Calu3 (cell line): ENCODE measurements at regions of chr7 and their contacts with region 1.

Region 1: GRCh38 chr7:15889507-15889906 is 203.0 kb upstream of the MEOX2 start:
- DNase-seq: peak; percentile 56
- H3K4me3 Mint-ChIP-seq: no peak overlapping the region
- H3K27ac Mint-ChIP-seq: no peak overlapping the region
- H3K4me1 Mint-ChIP-seq: no peaks in the 10 kb centered on the region
- H3K27me3 Mint-ChIP-seq: no peaks in the 10 kb centered on the region
- CTCF ChIP-seq: peak; percentile 57

Region 2: GRCh38 chr7:15305002-15305600 is 584.4 kb before region 1 on chr7:
- CTCF ChIA-PET with region 1: no interaction called
- intact Hi-C with region 1: loop called (anchors 10 kb)
- DNase-seq: peak; percentile 78
- H3K4me3 Mint-ChIP-seq: no peak overlapping the region
- H3K27ac Mint-ChIP-seq: no peak overlapping the region
- H3K4me1 Mint-ChIP-seq: no peaks in the 10 kb centered on the region
- H3K27me3 Mint-ChIP-seq: no peaks in the 10 kb centered on the region
- CTCF ChIP-seq: peak; percentile 68

Region 3: GRCh38 chr7:15326044-15326644 is 563.4 kb before region 1 on chr7:
- CTCF ChIA-PET with region 1: no interaction called
- intact Hi-C with region 1: loop called (anchors 5 kb)
- DNase-seq: no peak
- H3K4me3 Mint-ChIP-seq: no peak overlapping the region
- H3K27ac Mint-ChIP-seq: no peak overlapping the region
- H3K4me1 Mint-ChIP-seq: no peaks in the 10 kb centered on the region
- H3K27me3 Mint-ChIP-seq: no peaks in the 10 kb centered on the region
- CTCF ChIP-seq: peak; percentile 58

Region 4: DNA sequence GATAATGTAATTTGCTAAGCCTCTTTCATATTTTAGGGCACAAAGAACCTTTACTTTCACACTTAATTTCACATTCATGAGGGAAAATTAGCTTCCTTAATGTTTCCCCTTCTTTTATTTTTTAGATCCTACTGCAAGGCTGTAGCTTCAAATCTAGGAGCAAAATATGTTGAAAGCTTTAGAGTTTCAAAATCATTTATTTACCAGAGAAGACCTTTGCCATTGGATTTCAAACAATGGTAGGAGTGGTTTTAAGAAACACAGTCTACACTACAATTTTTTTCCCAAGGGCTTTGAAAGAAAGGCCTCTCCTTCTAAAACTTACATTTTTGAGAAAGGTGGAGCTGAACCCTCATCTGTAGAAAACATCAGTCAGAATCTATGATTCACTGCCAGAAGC is 159.8 kb before region 1 on chr7:
- CTCF ChIA-PET with region 1: no interaction called
- intact Hi-C with region 1: loop called (anchors 5 kb)
- DNase-seq: no peak
- H3K4me3 Mint-ChIP-seq: no peak overlapping the region
- H3K27ac Mint-ChIP-seq: no peak overlapping the region
- H3K4me1 Mint-ChIP-seq: peaks cover 16% of the 10 kb centered on the region
- H3K27me3 Mint-ChIP-seq: no peaks in the 10 kb centered on the region
- CTCF ChIP-seq: no peak